ENCODE measurements at regions of chr19 and their contacts with region 1.

Region 1: DNA sequence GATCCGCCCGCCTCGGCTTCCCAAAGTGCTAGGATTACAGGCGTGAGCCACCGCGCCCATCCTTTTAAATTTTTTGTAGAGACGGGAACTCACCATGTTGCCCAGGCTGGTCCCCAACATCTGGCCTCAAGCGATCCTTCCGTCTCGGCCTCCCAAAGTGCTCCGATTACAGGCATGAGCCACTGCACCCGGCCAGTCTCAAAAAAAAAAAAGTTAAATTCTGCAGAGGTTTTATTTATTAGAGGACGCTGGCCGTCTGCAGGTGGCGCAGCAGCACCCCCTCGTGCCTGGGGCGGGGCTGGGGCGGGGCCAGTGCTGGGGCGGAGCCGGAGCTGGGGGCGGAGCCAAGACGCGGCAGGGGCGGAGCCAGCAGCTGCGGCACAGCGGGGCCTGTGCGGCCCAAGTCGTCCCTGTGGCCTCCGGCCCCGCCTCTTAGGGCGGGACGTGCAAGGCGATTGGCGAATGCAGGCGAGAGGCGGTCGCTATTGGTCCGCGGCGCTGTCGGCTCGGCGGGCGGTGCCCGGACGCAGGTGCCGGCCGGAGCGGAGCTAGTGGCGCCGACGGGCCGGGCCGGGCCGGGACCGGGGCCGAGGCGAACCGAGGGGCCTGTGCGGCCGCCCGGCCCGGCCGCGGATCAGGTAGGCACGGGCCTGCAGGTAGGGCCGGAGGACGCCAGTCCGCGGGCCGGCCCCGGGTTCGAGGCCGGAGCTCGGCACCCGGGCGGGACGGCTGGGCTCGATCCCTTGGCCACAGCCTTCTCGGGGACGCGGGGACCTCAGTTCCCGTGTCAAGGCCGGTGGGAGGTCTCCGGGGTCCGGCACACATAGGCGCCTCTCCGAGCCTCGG is at the start of gene MARCHF2:
- DNase-seq: peak; percentile 99

Region 2: DNA sequence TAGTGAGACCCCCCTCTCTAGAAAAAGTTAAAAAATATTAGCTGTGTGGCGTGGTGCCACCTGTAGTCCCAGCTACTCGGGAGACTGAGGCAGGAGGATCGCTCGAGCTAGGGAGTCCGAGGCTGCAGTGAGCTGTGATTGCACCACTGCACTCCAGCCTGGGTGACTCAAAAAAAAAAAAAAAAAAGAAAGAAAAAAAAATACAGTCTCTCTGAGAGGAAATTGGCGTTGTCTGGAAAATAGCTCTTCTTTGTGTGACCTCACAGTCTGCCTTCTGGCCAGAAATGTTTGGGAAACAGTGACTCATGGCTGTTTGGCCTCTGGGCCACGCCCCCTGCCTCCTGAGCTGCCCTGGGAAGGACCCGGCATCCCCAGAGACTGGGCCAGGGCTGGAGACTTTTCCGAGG is 10.8 kb after region 1 on chr19:
- CTCF ChIA-PET with region 1: interaction called, 14 read pairs
- POLR2A ChIA-PET with region 1: no interaction called
- DNase-seq: peak; percentile 64

Region 3: DNA sequence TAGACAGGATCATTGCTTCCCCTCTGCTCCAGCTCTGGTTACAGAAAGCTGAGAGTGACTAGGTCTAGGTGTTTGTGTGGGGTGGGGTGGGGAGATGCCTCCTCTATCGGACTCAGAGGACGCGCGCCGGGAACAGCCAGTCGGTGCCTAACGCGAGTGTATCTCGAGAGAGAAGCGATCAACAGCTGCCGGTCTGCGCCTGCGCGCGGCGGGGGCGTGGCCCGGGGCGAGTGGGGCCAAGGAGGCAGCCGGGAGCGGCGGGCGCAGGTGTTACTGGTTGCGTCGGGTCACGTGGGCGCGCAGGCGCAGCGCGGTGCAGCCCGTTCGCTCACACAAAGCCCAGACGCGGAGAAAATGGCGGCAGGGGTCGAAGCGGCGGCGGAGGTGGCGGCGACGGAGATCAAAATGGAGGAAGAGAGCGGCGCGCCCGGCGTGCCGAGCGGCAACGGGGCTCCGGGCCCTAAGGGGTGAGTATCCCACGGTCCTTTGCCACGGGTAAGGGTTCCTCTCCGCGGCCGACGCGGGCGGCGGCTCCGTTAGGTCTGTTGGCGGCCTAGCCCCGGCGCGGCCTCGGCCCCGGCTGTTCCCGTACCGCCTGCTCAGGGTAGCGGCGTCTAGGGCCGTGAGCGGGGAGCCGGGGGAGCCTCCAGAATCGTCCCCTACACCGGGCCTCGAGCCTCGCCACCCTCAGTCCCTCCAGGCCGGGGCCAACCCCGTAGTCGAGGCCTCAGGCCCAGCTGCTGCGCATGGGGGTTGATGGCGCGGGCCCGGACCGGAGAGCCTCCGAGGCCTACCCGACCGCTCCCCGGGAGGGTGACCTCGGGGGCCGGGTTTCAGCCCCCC is 31.9 kb after region 1 on chr19 and contains the start of gene HNRNPM:
- CTCF ChIA-PET with region 1: no interaction called
- POLR2A ChIA-PET with region 1: interaction called, 27 read pairs
- DNase-seq: peak; percentile 99